Cardiac septum (tissue), 1 donor: ENCODE measurements at regions of chr18 and their contacts with region 1.

Region 1: GRCh38 chr18:12990967-12991838 is at the start of gene CEP192:
- DNase-seq: peak; percentile 98
- total RNA-seq, gene CEP192: 28.5 TPM

Region 2: DNA sequence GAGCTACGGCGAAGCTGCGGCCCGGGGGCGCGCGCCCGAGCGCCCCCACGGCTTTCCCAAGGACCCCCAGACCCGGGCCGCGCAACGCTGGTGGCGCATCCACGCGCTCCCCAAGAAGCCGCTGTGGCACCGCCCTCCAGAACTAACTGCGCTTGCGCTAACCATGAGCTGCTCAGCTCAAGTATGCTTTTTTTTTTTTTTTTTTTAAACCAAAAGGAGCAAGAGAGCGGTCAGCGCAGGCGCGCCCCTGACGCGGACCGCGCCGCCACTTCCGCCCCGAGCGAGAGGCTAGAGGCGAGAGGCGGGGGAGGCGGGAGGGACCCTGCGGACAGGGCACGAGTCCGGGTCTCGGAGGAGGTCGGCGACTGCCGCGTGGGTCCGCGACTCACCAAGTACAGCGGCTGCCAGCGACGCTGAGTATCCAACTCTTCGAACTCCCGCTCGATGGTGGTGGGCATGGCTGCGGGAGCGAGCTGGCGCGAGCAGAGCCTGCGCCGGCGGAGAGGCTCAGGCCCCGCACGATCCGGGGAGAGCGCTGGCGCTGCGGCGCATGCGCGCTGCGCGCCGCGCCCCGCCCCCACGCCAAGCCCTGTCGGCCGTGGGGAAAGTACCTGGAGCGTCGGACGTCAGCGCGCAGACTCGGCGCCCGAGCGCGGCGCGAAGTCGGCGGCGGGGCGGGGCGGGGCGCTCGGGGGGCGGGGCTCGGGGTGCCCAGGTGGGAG is 107.4 kb before region 1 on chr18 and contains the start of gene PTPN2:
- intact Hi-C with region 1: loop called (anchors 5 kb)
- DNase-seq: peak; percentile 96
- total RNA-seq, gene PTPN2: 14.5 TPM